Calu3 (cell line): ENCODE measurements at regions of chr12 and their contacts with region 1.

Region 1: GRCh38 chr12:64392221-64392620 is 1.7 kb upstream of the C12orf56 start:
- DNase-seq: peak; percentile 45
- H3K4me3 Mint-ChIP-seq: no peak overlapping the region
- H3K27ac Mint-ChIP-seq: no peak overlapping the region
- H3K4me1 Mint-ChIP-seq: peaks cover 5% of the 10 kb centered on the region
- H3K27me3 Mint-ChIP-seq: no peaks in the 10 kb centered on the region
- CTCF ChIP-seq: peak; percentile 24

Region 2: DNA sequence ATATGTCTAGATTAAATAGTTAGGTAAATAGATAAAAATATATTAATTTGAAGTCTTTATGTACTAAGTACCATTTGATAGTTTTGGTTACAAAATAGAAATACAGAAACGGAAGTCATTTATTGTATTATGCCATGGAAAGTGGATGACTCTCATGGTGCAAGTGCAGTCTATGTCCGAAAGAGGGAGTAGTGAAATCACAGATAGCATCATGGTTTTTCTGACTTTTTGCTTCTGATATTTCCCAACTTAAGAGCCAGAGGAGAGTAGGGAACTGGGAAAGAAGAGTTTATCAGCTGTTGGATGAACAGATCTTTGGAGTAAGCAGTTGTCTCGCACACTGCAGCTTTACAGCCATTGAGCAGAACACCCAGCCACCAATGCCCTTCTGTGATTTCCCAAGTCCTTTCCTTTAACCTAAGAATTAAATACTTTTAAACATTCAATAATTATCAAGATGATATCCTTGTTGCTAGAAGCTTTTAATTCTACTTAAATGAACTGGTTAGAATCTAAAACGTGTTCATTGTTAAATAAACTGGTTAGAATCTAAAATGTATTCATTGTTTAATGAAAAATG is 566.1 kb before region 1 on chr12:
- CTCF ChIA-PET with region 1: interaction called, 3 read pairs
- intact Hi-C with region 1: loop called (anchors 1 kb)
- DNase-seq: no peak
- H3K4me3 Mint-ChIP-seq: no peak overlapping the region
- H3K27ac Mint-ChIP-seq: no peak overlapping the region
- H3K4me1 Mint-ChIP-seq: peaks cover 18% of the 10 kb centered on the region
- H3K27me3 Mint-ChIP-seq: no peaks in the 10 kb centered on the region
- CTCF ChIP-seq: peak; percentile 63

Region 3: DNA sequence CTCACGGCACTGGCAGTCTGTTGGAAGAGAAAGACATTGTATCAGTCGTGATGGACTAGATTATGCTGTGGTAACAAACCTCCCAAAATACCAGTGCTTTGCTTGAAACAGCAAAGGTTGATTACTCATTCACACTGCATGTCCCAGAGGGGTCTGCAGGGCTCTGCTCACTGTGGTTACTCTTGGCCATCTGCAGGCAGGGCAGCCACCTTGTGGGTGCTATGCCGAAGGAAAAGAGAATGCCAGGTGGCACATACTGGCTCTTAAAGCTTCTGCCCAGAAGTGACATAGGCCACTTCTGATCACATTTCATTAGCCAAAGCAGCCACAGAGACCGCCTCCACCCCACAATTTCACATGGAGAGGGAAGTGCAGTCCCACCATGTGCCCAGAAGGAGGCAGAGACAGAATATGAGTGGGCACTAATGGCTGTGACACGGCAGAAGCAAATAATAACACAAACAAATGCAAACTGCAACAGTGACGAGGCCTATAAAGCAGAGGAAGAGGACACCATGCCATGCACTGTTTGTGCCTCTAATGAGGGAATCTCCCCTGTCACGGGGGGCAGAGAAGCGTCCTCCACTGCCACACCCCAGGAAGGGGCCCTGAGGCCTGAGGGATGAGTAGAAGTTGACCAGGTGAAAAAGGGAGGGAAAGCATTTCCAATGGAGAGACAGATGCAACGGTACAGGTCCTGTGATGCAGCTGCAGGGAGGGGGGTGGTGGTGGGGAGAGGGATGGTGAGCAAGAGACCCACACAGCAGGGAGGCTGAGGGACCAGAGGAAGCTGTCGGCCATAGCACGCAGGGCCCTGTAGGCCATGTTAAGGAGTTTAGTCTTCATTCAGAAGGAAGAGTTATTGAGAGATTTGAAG is 118.5 kb before region 1 on chr12:
- CTCF ChIA-PET with region 1: no interaction called
- intact Hi-C with region 1: loop called (anchors 1 kb)
- DNase-seq: peak; percentile 44
- H3K4me3 Mint-ChIP-seq: no peak overlapping the region
- H3K27ac Mint-ChIP-seq: no peak overlapping the region
- H3K4me1 Mint-ChIP-seq: no peaks in the 10 kb centered on the region
- H3K27me3 Mint-ChIP-seq: no peaks in the 10 kb centered on the region
- CTCF ChIP-seq: peak; percentile 62